CD8-positive, alpha-beta T cell (primary cell): ENCODE measurements at regions of chr9 and their contacts with region 1.

Region 1: DNA sequence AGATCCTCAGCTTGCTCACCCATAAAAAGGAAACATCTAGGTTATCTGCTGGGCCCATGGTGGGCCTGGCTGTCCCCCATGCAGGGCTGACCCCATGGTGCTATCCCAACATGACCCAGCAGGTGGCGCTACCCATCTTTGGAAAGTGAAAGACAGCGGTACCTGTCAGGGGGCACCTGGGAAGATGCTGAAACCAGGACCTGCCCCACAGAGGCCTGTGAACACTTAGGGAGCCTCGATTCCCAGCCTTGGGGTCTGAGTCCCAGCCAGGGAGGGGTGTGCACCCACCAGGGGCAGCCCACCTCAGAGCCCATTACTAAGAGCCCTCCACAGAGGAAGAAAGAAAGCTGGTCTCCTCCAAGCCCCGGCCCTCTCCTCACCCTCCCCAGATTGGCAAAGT is 46.6 kb upstream of the IPPK start:
- DNase-seq: peak; percentile 74 to 90 (median 79)
- ATAC-seq: peak; percentile 97
- H3K4me3 ChIP-seq: no peak overlapping the region
- H3K4me3 Mint-ChIP-seq: no peak overlapping the region
- H3K27ac ChIP-seq: no peak overlapping the region
- H3K27ac Mint-ChIP-seq: peak overlapping the region; percentile 49
- H3K4me1 ChIP-seq: peaks cover 10% of the 10 kb centered on the region
- H3K4me1 Mint-ChIP-seq: peaks cover 19% of the 10 kb centered on the region
- H3K27me3 ChIP-seq: no peaks in the 10 kb centered on the region
- H3K27me3 Mint-ChIP-seq: no peaks in the 10 kb centered on the region
- CTCF ChIP-seq: peak; percentile 88

Region 2: GRCh38 chr9:92728831-92729734 is 12.5 kb after region 1 on chr9:
- CTCF ChIA-PET with region 1: interaction called, 15 read pairs
- POLR2A ChIA-PET with region 1: no interaction called
- intact Hi-C with region 1: no loop called
- DNase-seq: peak in 1 of 9 experiments; percentile 44
- ATAC-seq: no peak
- H3K4me3 ChIP-seq: no peak overlapping the region
- H3K4me3 Mint-ChIP-seq: no peak overlapping the region
- H3K27ac ChIP-seq: no peak overlapping the region
- H3K27ac Mint-ChIP-seq: no peak overlapping the region
- H3K4me1 ChIP-seq: no peaks in the 10 kb centered on the region
- H3K4me1 Mint-ChIP-seq: peaks cover 33% of the 10 kb centered on the region
- H3K27me3 ChIP-seq: no peaks in the 10 kb centered on the region
- H3K27me3 Mint-ChIP-seq: no peaks in the 10 kb centered on the region
- CTCF ChIP-seq: no peak

Region 3: GRCh38 chr9:92790542-92791527 is 74.3 kb after region 1 on chr9:
- CTCF ChIA-PET with region 1: interaction called, 132 read pairs
- POLR2A ChIA-PET with region 1: no interaction called
- intact Hi-C with region 1: loop called in 1 of 2 experiments (anchors 1 kb)
- DNase-seq: peak; percentile 60 to 85 (median 79)
- ATAC-seq: peak; percentile 98
- H3K4me3 ChIP-seq: no peak overlapping the region
- H3K4me3 Mint-ChIP-seq: no peak overlapping the region
- H3K27ac ChIP-seq: no peak overlapping the region
- H3K27ac Mint-ChIP-seq: no peak overlapping the region
- H3K4me1 ChIP-seq: no peaks in the 10 kb centered on the region
- H3K4me1 Mint-ChIP-seq: peaks cover 4% of the 10 kb centered on the region
- H3K27me3 ChIP-seq: no peaks in the 10 kb centered on the region
- H3K27me3 Mint-ChIP-seq: peaks cover 3% of the 10 kb centered on the region
- CTCF ChIP-seq: peak; percentile 78